IMR-90 (cell line): ENCODE measurements at regions of chr18 and their contacts with region 1.

Region 1: GRCh38 chr18:49572611-49573345 is 10.9 kb downstream of the LIPG start:
- DNase-seq: no peak
- ATAC-seq: no peak
- H3K4me3 ChIP-seq: no peak overlapping the region
- H3K27ac ChIP-seq: no peak overlapping the region
- H3K4me1 ChIP-seq: no peaks in the 10 kb centered on the region
- H3K27me3 ChIP-seq: peaks cover 18% of the 10 kb centered on the region
- CTCF ChIP-seq: no peak
- POLR2A ChIP-seq: no peak
- RAD21 ChIP-seq: no peak

Region 2: GRCh38 chr18:49285627-49286026 is 287.2 kb before region 1 on chr18:
- CTCF ChIA-PET with region 1: no interaction called
- POLR2A ChIA-PET with region 1: interaction called, 13 read pairs
- dilution Hi-C with region 1: no loop called
- in situ Hi-C with region 1: no loop called
- intact Hi-C with region 1: no loop called
- DNase-seq: no peak
- ATAC-seq: no peak
- H3K4me3 ChIP-seq: no peak overlapping the region
- H3K27ac ChIP-seq: no peak overlapping the region
- H3K4me1 ChIP-seq: no peaks in the 10 kb centered on the region
- H3K27me3 ChIP-seq: no peaks in the 10 kb centered on the region
- CTCF ChIP-seq: no peak
- POLR2A ChIP-seq: no peak
- RAD21 ChIP-seq: no peak

Region 3: GRCh38 chr18:49668574-49669275 is 95.9 kb after region 1 on chr18:
- CTCF ChIA-PET with region 1: no interaction called
- POLR2A ChIA-PET with region 1: no interaction called
- dilution Hi-C with region 1: no loop called
- in situ Hi-C with region 1: no loop called
- intact Hi-C with region 1: no loop called
- DNase-seq: no peak
- ATAC-seq: peak; percentile 53
- H3K4me3 ChIP-seq: no peak overlapping the region
- H3K27ac ChIP-seq: no peak overlapping the region
- H3K4me1 ChIP-seq: no peaks in the 10 kb centered on the region
- H3K27me3 ChIP-seq: peaks cover 50% of the 10 kb centered on the region
- CTCF ChIP-seq: no peak
- POLR2A ChIP-seq: no peak
- RAD21 ChIP-seq: no peak